ENCODE measurements at regions of chr17 and their contacts with region 1.

Region 1: DNA sequence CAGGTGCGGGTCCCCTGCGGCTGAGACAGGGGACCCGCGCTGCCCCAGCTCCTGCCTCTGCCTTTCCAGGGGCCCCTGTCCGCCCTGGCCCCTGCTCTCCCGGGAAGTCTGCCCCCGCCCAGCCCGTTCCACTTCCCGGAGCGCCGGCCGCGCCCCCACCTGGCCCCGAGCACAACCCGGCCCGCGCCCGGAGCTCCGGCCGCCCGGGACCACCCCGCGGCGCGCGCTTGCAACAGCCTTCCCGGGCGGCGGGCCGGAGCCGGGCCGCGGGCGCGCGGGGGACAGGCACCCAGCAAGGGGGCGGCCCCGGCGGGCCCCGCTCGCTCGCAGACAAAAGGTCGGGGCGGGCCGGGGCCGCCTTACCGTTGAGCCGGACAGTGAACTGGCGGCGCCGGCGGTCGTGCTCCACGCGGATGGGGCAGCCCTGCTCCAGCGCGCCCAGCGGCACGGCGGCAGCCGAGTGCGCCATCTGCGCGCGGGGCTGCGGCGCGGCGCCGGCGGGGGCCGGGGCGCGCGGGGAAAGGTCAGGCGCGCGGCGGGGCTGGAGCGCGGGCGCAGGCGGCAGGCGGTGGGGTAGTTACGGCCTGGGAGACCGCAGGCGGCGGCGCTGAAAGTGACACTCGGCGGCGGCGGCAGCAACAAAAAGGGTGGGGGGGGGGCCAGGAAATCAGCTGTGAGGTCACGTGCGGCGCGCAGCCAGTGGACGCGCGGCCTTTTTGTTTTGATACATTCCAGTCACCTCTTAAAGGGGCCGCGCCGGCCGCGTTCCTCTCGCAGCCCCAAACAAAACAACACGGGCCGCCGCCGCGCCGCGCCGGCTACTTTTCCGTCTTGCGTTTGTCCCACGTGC is at the start of gene NATD1:
- DNase-seq: peak; percentile 69 to 94 (median 87)

Region 2: DNA sequence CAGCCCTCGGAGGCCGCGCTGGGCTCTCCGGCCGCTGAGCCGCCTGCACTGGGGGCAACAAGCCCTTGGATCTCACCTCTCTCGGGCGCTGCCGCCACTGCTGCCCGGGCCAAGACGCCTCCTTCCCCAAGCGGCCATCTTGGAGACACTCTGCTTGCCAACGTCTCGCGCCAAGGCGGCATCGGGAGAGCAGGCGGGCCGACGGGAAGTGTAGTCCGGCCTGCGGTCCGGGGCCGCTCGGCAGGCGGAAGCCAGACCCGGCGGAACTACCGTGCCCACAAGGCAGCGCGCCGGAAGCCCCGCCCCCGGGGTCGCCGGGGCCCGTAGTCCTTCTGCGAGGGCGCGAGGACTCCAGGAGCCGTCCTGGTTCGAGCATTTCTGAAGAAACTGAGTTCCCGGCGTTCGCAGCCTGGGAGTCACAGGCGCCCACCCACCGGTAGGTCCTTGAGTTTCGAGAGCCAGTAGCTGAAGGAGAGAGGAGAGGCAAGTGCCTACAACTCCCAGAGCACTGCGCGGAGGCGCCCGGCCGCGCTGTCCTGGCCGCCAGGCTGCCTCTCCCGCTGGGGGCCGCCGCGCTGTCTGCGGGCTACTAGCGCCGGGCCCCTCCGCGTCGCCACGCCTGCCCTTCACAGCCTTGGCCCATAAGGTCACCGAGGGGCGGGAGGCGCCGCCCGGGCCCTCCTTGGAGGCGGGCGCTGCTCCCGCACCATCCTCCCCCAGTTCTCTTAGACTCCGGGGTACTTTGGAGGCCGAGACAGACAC is 38.8 kb before region 1 on chr17 and contains the start of gene TMEM11:
- intact Hi-C with region 1: loop called (anchors 5 kb)
- DNase-seq: peak; percentile 87 to 99 (median 97)

Region 3: DNA sequence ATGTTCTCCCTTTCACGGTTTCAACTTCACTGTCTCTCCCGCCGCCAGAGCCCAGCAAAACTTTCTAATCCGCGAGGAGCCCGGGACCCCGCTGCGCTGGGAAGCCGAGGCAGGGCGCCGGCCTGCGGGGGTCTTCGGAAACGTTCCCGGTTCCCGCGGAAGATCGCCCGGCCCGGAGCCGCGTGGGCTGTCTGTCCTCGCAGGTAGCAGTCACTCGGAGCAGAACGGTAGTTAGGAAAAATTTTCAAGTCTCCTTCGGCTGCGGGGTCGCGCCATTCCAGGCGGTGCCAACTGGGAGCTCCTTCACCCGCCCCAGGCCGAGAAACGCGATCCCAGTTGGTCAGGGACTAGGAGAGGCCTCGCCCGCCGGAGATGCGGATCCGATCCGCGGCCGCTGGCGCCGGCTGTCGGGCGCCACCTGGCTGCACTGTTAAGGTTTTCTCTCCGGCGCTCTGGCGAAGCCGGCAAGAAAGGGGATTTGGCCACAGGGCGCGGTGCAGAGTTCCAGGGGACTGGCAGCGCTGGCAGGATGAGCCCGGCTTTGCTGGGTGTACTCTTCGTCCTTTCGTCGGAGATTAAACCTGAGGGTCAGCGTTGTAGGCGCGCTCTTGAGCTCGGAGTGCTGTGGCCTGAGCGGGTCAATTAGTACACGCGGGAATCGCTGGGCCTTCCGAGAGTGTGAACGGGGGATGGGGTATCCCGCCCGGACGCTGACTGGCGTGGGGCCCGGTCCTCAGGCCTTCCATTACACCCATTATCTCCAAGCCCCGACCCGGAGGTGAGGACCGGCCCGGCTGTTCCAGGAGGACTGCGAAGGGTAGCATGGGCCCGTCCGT is 258.6 kb after region 1 on chr17:
- intact Hi-C with region 1: no loop called
- DNase-seq: peak; percentile 62 to 93 (median 84)